Activated CD4-positive, alpha-beta memory T cell treated with anti-CD3 and anti-CD28 coated beads for 36 hours (primary cell): ENCODE measurements at regions of chr9 and their contacts with region 1.

Region 1: DNA sequence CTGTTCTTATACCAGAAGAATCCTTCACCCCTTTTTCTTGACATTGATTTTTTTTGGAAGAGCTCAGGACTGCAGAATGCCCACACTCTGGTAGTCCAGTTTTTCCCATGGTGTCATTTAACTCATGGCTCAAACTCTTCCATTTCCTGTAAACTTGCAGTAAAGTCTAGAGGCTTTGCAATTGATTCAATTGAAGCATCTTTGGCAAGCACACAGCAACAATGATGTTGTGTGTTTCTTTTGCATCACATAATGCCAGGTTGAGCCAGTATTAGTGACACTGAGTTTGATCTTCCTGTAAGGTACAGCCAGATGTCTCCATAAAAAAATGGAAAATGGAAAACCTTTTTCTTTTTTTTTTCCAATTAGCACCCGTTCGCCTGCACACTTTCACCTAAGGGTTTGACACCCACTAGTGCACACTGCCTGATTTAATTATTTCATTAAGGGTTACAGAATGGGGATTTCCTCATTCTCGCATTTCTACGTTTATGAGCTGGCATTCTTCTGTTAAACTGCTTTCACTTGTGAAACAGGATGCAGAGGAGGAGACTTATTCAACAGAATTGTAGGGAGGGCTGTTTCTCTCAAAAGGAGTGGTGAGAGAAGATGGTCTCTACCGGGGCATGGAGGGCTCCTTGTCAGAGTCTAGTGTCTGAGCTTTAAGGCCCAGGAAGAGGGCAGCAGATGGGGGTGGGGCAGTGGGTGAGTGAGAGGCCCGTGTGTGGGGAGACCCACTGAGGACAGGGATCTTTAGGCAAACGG is 2.3 kb upstream of the S1PR3 start:
- DNase-seq: peak; percentile 22
- H3K4me3 Mint-ChIP-seq: peak overlapping the region; percentile 37
- H3K27ac Mint-ChIP-seq: peak overlapping the region; percentile 80
- H3K4me1 Mint-ChIP-seq: peaks cover 41% of the 10 kb centered on the region
- H3K27me3 Mint-ChIP-seq: peaks cover 48% of the 10 kb centered on the region

Region 2: GRCh38 chr9:88303721-88304451 is 685.1 kb before region 1 on chr9:
- CTCF ChIA-PET with region 1: no interaction called
- POLR2A ChIA-PET with region 1: no interaction called
- intact Hi-C with region 1: loop called (anchors 1 kb)
- DNase-seq: peak; percentile 80
- H3K4me3 Mint-ChIP-seq: peak overlapping the region; percentile 33
- H3K27ac Mint-ChIP-seq: no peak overlapping the region
- H3K4me1 Mint-ChIP-seq: peaks cover 21% of the 10 kb centered on the region
- H3K27me3 Mint-ChIP-seq: peaks cover 26% of the 10 kb centered on the region

Region 3: DNA sequence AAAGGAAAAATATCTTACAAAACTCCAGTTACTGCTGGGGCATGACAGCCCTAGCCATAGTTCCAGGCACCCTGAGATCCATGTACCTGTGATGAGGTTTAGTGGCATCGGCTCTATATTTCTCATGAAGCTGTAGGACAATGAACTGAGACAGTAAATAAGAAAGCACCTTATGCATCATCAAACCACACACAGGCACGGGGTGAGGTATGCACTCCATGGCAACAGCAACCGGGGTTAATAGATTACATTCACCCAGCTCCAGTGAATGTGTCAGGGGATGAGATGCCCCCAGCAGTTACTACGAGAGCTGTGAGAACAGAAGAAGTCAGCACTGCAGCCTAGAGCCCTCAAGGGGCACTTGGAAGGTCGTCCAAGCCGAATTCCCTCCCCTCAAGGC is 159.7 kb before region 1 on chr9:
- CTCF ChIA-PET with region 1: no interaction called
- POLR2A ChIA-PET with region 1: no interaction called
- intact Hi-C with region 1: loop called (anchors 2 kb)
- DNase-seq: peak; percentile 56
- H3K4me3 Mint-ChIP-seq: no peak overlapping the region
- H3K27ac Mint-ChIP-seq: no peak overlapping the region
- H3K4me1 Mint-ChIP-seq: peaks cover 6% of the 10 kb centered on the region
- H3K27me3 Mint-ChIP-seq: peaks cover 76% of the 10 kb centered on the region

Region 4: DNA sequence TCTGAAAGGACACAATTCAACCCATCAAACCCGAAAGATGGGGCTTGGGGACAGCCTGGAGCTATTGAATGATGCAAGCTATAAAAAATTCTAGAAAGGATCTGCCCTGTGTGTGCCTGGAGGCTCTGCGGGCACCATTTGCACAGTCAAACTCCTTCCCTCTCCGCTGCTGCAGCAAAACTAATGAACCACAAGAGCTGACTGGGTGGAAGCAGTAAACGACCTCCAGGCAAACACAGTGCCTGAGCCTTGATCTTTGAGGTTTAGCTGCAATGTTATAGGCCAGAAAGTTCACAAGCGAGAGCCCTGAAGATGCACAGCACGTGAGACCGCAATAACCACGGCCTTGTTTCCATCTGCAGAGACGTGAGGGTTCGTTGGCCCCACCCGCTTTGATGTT is 66.9 kb before region 1 on chr9:
- CTCF ChIA-PET with region 1: no interaction called
- POLR2A ChIA-PET with region 1: no interaction called
- intact Hi-C with region 1: loop called (anchors 1 kb)
- DNase-seq: peak; percentile 64
- H3K4me3 Mint-ChIP-seq: no peak overlapping the region
- H3K27ac Mint-ChIP-seq: no peak overlapping the region
- H3K4me1 Mint-ChIP-seq: peaks cover 40% of the 10 kb centered on the region
- H3K27me3 Mint-ChIP-seq: peaks cover 8% of the 10 kb centered on the region

Region 5: GRCh38 chr9:88975966-88976889 is 12.8 kb before region 1 on chr9:
- CTCF ChIA-PET with region 1: no interaction called
- POLR2A ChIA-PET with region 1: no interaction called
- intact Hi-C with region 1: loop called (anchors 1 kb)
- DNase-seq: peak; percentile 29
- H3K4me3 Mint-ChIP-seq: no peak overlapping the region
- H3K27ac Mint-ChIP-seq: no peak overlapping the region
- H3K4me1 Mint-ChIP-seq: peaks cover 15% of the 10 kb centered on the region
- H3K27me3 Mint-ChIP-seq: peaks cover 14% of the 10 kb centered on the region